ENCODE measurements at regions of chr16 and their contacts with region 1.

Region 1: GRCh38 chr16:69396187-69397061 is 10.6 kb upstream of the TERF2 start:
- DNase-seq: peak; percentile 74
- H3K4me3 Mint-ChIP-seq: no peak overlapping the region
- H3K27ac Mint-ChIP-seq: peak overlapping the region; percentile 58
- H3K4me1 Mint-ChIP-seq: peaks cover 11% of the 10 kb centered on the region
- H3K27me3 Mint-ChIP-seq: peaks cover 2% of the 10 kb centered on the region

Region 2: DNA sequence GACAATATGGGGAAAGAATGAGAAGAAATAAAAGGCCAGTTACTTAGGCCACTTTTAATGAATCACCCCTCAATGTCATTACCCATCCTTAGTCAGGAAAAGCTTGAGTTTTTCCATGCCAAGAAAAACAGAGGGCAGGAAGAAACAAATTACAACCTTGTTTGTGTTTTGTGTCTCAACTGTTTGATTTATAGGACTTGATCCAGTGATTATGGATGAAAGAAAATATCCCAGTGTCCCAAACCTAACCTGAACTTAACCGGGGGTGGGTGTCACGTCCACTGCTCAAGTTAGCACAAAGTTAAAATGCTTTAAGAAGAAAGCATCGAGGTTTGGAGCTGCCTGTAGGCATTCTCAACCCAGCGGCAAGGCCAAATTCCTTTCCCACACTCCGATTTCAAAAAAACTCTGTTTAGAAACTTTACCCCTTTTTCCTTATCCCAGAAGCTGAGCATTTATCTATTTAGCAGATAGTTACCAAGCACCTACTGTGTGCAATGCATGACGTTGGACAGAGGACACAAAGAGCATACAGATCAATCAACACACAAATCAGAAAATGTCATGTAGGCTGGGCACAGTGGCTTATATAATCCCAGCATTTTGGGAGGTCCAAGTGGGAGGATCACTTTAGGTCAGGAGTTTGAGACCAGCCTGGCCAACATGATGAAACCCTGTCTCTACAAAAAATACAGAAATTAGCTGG is 14.0 kb after region 1 on chr16:
- CTCF ChIA-PET with region 1: interaction called, 20 read pairs
- POLR2A ChIA-PET with region 1: no interaction called
- intact Hi-C with region 1: no loop called
- DNase-seq: no peak
- H3K4me3 Mint-ChIP-seq: no peak overlapping the region
- H3K27ac Mint-ChIP-seq: no peak overlapping the region
- H3K4me1 Mint-ChIP-seq: peaks cover 2% of the 10 kb centered on the region
- H3K27me3 Mint-ChIP-seq: peaks cover 2% of the 10 kb centered on the region

Region 3: DNA sequence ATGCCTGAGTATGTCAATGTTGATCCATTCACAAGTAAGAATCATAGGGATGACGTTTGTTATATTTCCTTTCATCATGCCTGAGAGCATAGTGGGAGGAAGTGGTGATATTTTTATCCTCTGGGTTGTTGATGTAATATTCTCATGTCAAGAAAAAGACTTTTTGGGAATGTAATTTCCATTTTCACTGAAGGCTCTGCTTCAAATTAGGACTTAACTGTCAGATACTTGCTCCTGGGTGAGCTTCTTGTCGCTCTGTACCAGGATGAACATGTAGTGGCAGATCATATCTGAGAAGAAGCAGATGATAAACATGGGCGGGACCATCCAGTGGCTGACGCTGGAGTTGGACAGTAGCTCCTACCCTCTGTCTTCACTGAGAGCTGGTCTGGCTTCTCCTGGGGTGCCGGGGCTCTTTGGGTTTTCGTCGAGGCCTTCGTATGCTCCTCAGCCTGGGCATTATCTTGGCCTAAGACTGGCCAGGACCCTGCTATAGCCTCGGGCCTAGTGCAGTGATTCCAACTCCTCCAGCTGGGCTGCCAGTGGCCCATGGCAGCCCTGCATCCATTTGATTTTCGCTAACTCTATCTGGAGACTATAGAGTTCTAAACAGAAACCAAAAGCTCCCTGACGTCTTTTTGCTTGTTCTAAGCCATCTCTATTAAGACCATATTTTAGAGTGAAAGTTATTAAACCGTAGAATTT is 47.7 kb after region 1 on chr16:
- CTCF ChIA-PET with region 1: interaction called, 10 read pairs
- POLR2A ChIA-PET with region 1: no interaction called
- intact Hi-C with region 1: loop called (anchors 5 kb)
- DNase-seq: peak; percentile 41
- H3K4me3 Mint-ChIP-seq: peak overlapping the region; percentile 62
- H3K27ac Mint-ChIP-seq: peak overlapping the region; percentile 88
- H3K4me1 Mint-ChIP-seq: peaks cover 39% of the 10 kb centered on the region
- H3K27me3 Mint-ChIP-seq: no peaks in the 10 kb centered on the region

Region 4: GRCh38 chr16:69651217-69651616 is 254.8 kb after region 1 on chr16:
- CTCF ChIA-PET with region 1: interaction called, 21 read pairs
- POLR2A ChIA-PET with region 1: no interaction called
- intact Hi-C with region 1: no loop called
- DNase-seq: no peak
- H3K4me3 Mint-ChIP-seq: no peak overlapping the region
- H3K27ac Mint-ChIP-seq: no peak overlapping the region
- H3K4me1 Mint-ChIP-seq: no peaks in the 10 kb centered on the region
- H3K27me3 Mint-ChIP-seq: no peaks in the 10 kb centered on the region